Left ventricle myocardium inferior (tissue), 1 donor: ENCODE measurements at regions of chr17 and their contacts with region 1.

Region 1: GRCh38 chr17:7279448-7279847 is 2.1 kb upstream of the SLC2A4 start:
- DNase-seq: no peak
- H3K4me3 ChIP-seq: no peak overlapping the region
- H3K27ac ChIP-seq: no peak overlapping the region
- H3K4me1 ChIP-seq: peaks cover 42% of the 10 kb centered on the region
- H3K27me3 ChIP-seq: peaks cover 31% of the 10 kb centered on the region
- CTCF ChIP-seq: no peak

Region 2: GRCh38 chr17:7219812-7220581 is 59.5 kb before region 1 on chr17 and contains the starts of genes ACADVL and DLG4:
- intact Hi-C with region 1: no loop called
- DNase-seq: peak; percentile 95
- H3K4me3 ChIP-seq: peak within 1 kb of the TSS; percentile 85
- H3K27ac ChIP-seq: peak within 1 kb of the TSS; percentile 98
- H3K4me1 ChIP-seq: peaks cover 97% of the 10 kb centered on the region
- H3K27me3 ChIP-seq: no peaks in the 10 kb centered on the region
- CTCF ChIP-seq: no peak
- total RNA-seq, gene ACADVL: 1,845 TPM
- total RNA-seq, gene DLG4: 14.0 TPM

Region 3: GRCh38 chr17:7348478-7349242 is 69.2 kb after region 1 on chr17:
- intact Hi-C with region 1: loop called (anchors 10 kb)
- DNase-seq: no peak
- H3K4me3 ChIP-seq: no peak overlapping the region
- H3K27ac ChIP-seq: peak overlapping the region; percentile 99
- H3K4me1 ChIP-seq: peaks cover 49% of the 10 kb centered on the region
- H3K27me3 ChIP-seq: no peaks in the 10 kb centered on the region
- CTCF ChIP-seq: no peak